Mammary epithelial cell (primary cell): ENCODE measurements at regions of chr20 and their contacts with region 1.

Region 1: DNA sequence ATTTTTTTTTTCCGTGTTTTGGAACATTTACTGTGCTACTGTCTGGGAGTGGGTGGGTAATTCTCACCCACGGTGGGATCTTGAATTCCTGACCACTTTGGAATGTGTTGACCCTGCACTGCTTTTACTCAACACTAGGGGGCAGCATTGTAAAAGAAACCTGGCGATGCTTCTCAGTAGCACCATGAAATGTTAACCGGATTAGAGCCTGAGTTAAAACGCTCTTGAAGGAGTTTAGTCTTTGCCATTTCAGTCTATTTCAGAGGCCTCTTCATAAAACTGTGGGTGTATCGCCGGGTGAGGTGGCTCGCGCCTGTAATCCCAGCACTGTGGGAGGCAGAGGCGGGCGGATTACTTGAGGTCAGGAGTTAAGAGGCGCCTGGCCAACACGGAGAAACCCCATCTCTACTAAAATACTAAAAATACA is 114.4 kb upstream of the PRND start:
- DNase-seq: peak; percentile 40
- H3K4me3 ChIP-seq: no peak overlapping the region
- H3K27ac ChIP-seq: no peak overlapping the region
- H3K4me1 ChIP-seq: peaks cover 11% of the 10 kb centered on the region
- H3K27me3 ChIP-seq: no peaks in the 10 kb centered on the region
- CTCF ChIP-seq: peak; percentile 91 to 93

Region 2: GRCh38 chr20:4358552-4358951 is 248.7 kb before region 1 on chr20:
- CTCF ChIA-PET with region 1: no interaction called
- dilution Hi-C with region 1: no loop called
- in situ Hi-C with region 1: no loop called
- intact Hi-C with region 1: no loop called
- DNase-seq: no peak
- H3K4me3 ChIP-seq: no peak overlapping the region
- H3K27ac ChIP-seq: no peak overlapping the region
- H3K4me1 ChIP-seq: no peaks in the 10 kb centered on the region
- H3K27me3 ChIP-seq: no peaks in the 10 kb centered on the region
- CTCF ChIP-seq: no peak

Region 3: DNA sequence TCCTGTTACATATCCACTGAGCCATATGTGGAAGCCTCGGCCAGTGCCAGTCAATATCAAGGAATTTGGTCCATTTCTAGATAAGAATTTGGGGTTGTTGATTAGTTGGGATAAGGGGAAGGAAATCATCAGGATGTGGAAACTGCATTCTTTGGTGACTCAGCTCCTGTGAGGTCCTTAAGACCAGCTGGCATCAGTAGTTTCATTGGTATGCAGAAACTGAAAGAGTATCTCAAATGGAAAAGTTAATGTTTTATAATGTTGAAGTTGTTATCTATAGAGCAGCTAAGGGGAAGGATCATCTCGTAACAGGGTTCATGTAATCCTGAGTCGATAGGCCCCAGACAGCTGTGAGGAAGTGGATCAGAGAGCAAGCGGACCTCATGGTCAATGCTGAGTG is 26.5 kb after region 1 on chr20:
- CTCF ChIA-PET with region 1: no interaction called
- dilution Hi-C with region 1: no loop called
- in situ Hi-C with region 1: no loop called
- intact Hi-C with region 1: no loop called
- DNase-seq: peak; percentile 66
- H3K4me3 ChIP-seq: no peak overlapping the region
- H3K27ac ChIP-seq: peak overlapping the region; percentile 24
- H3K4me1 ChIP-seq: peaks cover 30% of the 10 kb centered on the region
- H3K27me3 ChIP-seq: no peaks in the 10 kb centered on the region
- CTCF ChIP-seq: no peak

Region 4: GRCh38 chr20:4949833-4950178 is 342.5 kb after region 1 on chr20:
- CTCF ChIA-PET with region 1: no interaction called
- dilution Hi-C with region 1: no loop called
- in situ Hi-C with region 1: loop called (anchors 25 kb)
- intact Hi-C with region 1: loop called (anchors 2 kb)
- DNase-seq: peak; percentile 9
- H3K4me3 ChIP-seq: no peak overlapping the region
- H3K27ac ChIP-seq: no peak overlapping the region
- H3K4me1 ChIP-seq: peaks cover 16% of the 10 kb centered on the region
- H3K27me3 ChIP-seq: no peaks in the 10 kb centered on the region
- CTCF ChIP-seq: peak; percentile 49 to 61

Region 5: GRCh38 chr20:4956200-4956810 is 349.0 kb after region 1 on chr20:
- CTCF ChIA-PET with region 1: no interaction called
- dilution Hi-C with region 1: no loop called
- in situ Hi-C with region 1: loop called (anchors 25 kb)
- intact Hi-C with region 1: loop called (anchors 2 kb)
- DNase-seq: peak; percentile 34
- H3K4me3 ChIP-seq: no peak overlapping the region
- H3K27ac ChIP-seq: no peak overlapping the region
- H3K4me1 ChIP-seq: peaks cover 6% of the 10 kb centered on the region
- H3K27me3 ChIP-seq: no peaks in the 10 kb centered on the region
- CTCF ChIP-seq: peak; percentile 81 to 90

Region 6: GRCh38 chr20:5078399-5078958 is 471.2 kb after region 1 on chr20:
- CTCF ChIA-PET with region 1: no interaction called
- dilution Hi-C with region 1: no loop called
- in situ Hi-C with region 1: loop called in 1 of 2 experiments (anchors 25 kb)
- intact Hi-C with region 1: no loop called
- DNase-seq: peak; percentile 17
- H3K4me3 ChIP-seq: no peak overlapping the region
- H3K27ac ChIP-seq: no peak overlapping the region
- H3K4me1 ChIP-seq: peaks cover 9% of the 10 kb centered on the region
- H3K27me3 ChIP-seq: no peaks in the 10 kb centered on the region
- CTCF ChIP-seq: no peak

Region 7: GRCh38 chr20:5100684-5101347 is 493.5 kb after region 1 on chr20:
- CTCF ChIA-PET with region 1: no interaction called
- dilution Hi-C with region 1: no loop called
- in situ Hi-C with region 1: loop called in 1 of 2 experiments (anchors 25 kb)
- intact Hi-C with region 1: loop called (anchors 1 kb)
- DNase-seq: peak; percentile 56
- H3K4me3 ChIP-seq: no peak overlapping the region
- H3K27ac ChIP-seq: no peak overlapping the region
- H3K4me1 ChIP-seq: no peaks in the 10 kb centered on the region
- H3K27me3 ChIP-seq: no peaks in the 10 kb centered on the region
- CTCF ChIP-seq: peak; percentile 76 to 79

Region 8: GRCh38 chr20:5191829-5192569 is 584.7 kb after region 1 on chr20:
- CTCF ChIA-PET with region 1: no interaction called
- dilution Hi-C with region 1: no loop called
- in situ Hi-C with region 1: no loop called
- intact Hi-C with region 1: loop called (anchors 1 kb)
- DNase-seq: peak; percentile 63
- H3K4me3 ChIP-seq: no peak overlapping the region
- H3K27ac ChIP-seq: no peak overlapping the region
- H3K4me1 ChIP-seq: peaks cover 4% of the 10 kb centered on the region
- H3K27me3 ChIP-seq: no peaks in the 10 kb centered on the region
- CTCF ChIP-seq: peak; percentile 63 to 70

Region 9: DNA sequence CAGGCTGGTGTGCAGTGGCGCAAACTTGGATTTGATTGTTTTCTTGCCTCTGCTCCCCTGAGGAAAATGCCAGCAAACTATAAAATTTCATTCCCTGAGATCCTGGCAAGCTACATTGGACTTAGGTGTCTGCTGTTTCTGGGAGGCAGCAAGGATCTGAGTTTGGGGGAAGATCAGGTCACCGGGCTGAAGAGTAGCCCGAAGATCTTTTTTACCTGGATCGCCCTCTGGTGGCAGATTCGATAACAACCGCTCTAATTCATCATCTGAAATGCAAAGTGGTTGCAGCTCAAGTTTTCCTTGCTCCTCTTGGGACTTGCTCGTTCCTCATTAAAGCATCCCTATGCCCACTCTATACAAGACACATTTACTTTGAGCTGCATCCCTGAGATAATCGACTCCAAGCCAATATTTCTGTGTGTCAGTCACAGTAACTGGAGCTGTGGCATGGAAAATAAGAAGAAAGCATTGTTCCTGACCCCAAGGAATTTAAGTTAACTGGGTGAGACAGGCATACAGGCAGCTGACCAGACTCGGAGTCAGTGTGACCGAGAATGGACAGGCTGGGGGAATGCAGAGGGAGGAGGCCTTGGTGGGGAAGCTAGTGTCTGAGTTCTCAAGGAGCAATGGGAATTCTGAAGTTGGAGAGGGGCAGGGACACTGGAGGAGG is 841.3 kb after region 1 on chr20:
- CTCF ChIA-PET with region 1: no interaction called
- dilution Hi-C with region 1: no loop called
- in situ Hi-C with region 1: no loop called
- intact Hi-C with region 1: loop called (anchors 10 kb)
- DNase-seq: peak; percentile 28
- H3K4me3 ChIP-seq: no peak overlapping the region
- H3K27ac ChIP-seq: no peak overlapping the region
- H3K4me1 ChIP-seq: no peaks in the 10 kb centered on the region
- H3K27me3 ChIP-seq: peaks cover 6% of the 10 kb centered on the region
- CTCF ChIP-seq: peak; percentile 67 to 68